Kidney (tissue), 22 donors: ENCODE measurements at regions of chr12 and their contacts with region 1.

Region 1: DNA sequence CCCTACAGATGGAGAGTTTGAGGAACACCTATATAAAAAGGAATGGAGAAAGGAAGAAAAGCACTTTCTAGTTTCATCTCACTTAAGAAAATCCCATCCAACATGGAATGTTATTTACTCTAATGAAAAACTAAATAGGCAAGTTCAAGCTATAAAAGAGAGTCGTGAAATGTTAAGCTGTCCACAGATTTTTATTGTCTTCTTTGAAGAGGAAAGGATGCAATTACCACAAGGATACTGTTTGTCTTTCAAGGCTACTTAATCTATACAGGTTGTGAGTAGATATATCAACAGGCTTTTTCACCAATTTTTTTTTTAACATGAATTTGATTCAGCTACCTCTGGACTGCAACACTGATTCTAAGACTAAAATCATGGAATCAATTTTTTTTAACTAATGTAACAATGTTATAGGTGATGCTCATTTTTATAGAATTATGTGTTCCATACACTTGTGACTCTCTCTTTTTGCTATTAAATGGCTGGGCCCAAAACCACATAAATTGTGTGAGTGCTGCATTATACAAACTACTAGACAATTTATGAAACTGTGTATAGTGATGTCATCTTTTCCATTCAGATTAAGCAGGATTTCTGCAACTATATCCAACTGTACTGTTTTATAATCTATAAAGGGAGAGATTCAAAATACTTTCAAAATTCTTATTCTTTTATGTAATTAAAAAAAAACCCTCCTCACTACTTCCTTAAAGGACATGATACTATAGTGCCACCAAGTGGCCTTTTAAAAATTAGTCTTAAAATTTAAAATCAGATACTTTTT is 26.8 kb upstream of the BMAL2 start:
- DNase-seq: peak in 2 of 5 donors; percentile 43 to 56
- H3K4me3 ChIP-seq: no peak overlapping the region
- H3K27ac ChIP-seq: no peak overlapping the region
- H3K4me1 ChIP-seq: no peaks in the 10 kb centered on the region
- H3K27me3 ChIP-seq: no peaks in the 10 kb centered on the region
- CTCF ChIP-seq: no peak

Region 2: DNA sequence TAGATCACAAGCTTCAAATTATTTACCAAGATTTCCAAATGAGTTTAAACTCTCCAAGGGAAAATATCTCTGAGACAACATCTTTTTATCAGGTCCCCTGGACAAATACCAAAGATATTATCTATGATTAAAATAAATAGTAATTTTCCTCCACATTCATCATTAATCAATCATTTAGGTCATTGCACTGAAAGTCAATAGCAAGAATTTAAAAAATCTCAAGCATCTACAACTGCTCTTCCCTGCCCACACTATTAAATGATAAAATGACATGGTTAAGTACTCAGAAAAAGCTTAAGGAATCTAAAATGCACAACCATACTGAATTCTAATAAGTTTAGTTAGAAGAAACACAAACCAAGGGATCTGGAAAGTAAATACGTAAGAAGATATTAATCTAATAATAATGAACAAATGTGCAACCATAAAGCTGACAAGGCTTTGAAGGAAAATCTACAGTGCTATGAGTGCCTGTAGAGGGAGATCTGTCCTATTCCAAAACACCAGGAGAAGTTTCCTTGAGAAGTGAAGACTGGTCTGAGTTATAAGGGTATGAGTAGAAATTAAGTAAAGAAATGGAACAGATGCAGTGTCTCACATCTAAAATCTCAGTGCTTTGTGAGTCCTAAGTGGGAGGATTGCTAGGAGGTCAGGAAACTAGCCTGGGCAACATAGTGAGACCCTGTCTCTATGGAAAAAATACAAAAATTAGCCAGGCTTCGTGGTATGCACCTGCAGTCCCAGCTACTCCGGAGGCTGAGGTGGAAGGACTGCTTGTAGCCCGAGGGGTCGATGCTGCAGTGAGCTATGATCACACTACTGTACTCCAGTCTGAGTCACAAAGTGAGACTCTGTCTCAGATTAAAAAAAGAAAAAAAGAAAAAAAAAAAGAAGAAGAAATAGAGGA is 387.3 kb before region 1 on chr12:
- intact Hi-C with region 1: no loop called
- DNase-seq: peak in 2 of 5 donors; percentile 9 to 48
- H3K4me3 ChIP-seq: no peak overlapping the region
- H3K27ac ChIP-seq: no peak overlapping the region
- H3K4me1 ChIP-seq: no peaks in the 10 kb centered on the region
- H3K27me3 ChIP-seq: no peaks in the 10 kb centered on the region
- CTCF ChIP-seq: peak; percentile 36

Region 3: GRCh38 chr12:27024291-27024690 is 281.6 kb before region 1 on chr12:
- intact Hi-C with region 1: loop called (anchors 10 kb)
- DNase-seq: no peak
- H3K4me3 ChIP-seq: no peak overlapping the region
- H3K27ac ChIP-seq: no peak overlapping the region
- H3K4me1 ChIP-seq: peaks cover 3 to 9% (median 8%) of the 10 kb centered on the region in 3 donors
- H3K27me3 ChIP-seq: no peaks in the 10 kb centered on the region
- CTCF ChIP-seq: no peak

Region 4: GRCh38 chr12:27252934-27253333 is 52.9 kb before region 1 on chr12:
- intact Hi-C with region 1: no loop called
- DNase-seq: peak in 2 of 5 donors; percentile 37 to 43
- H3K4me3 ChIP-seq: peak overlapping the region in 2 of 3 donors; percentile 3 to 11
- H3K27ac ChIP-seq: no peak overlapping the region
- H3K4me1 ChIP-seq: peaks cover 0 to 8% (median 3%) of the 10 kb centered on the region in 3 donors
- H3K27me3 ChIP-seq: no peaks in the 10 kb centered on the region
- CTCF ChIP-seq: no peak

Region 5: DNA sequence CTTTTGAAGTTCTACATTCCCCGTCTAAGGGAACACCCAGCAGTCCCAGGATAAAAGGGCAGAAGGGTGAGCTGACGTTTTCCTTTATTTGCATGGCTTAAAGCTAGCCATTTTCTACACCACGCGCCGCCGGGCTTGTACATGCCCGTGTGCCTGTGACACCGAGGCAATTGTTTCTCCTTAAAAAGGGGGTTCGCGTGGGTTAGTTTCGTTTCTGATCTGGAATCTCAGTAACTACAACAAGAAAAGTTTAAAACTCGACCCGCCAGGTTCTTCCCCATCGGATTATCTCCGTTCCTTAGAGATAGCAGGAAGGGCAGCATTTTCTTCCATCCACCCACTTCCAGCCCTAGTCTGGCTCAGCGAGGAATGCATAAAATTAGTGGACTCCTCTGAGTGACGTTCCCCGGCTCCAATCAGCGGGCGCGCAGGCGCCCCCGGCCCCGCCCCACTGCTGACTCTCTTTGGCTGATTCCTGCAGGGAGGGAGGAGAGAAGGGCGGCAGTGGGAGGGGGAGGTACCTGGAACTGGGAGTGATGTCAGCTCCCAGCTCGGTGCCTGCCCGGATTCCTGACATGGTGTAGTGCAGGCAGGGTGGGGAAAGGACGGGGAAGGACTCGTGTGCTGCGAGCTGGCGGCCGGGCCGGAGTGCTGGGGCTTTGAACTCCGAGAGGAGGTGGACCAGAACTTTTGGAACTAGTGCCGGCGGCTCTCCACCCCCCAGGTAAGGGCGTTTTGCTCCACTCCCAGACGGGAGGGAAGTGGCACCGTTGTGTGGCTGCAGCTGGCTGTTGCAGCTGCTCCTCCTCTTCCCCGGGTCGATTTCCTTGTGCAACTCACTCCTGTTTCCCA is 218.0 kb after region 1 on chr12 and contains the start of gene PPFIBP1:
- intact Hi-C with region 1: no loop called
- DNase-seq: peak; percentile 99 to 100 (median 100)
- H3K4me3 ChIP-seq: peak within 1 kb of the TSS; percentile 84 to 96 (median 95)
- H3K27ac ChIP-seq: peak within 1 kb of the TSS; percentile 96 to 98
- H3K4me1 ChIP-seq: peaks cover 5 to 13% (median 8%) of the 10 kb centered on the region in 3 donors
- H3K27me3 ChIP-seq: no peaks in the 10 kb centered on the region
- CTCF ChIP-seq: peak; percentile 4
- total RNA-seq, gene PPFIBP1: 175 TPM